B cell (primary cell): ENCODE measurements at regions of chr1 and their contacts with region 1.

Region 1: GRCh38 chr1:27321813-27322577 is at the start of gene TMEM222:
- DNase-seq: peak; percentile 98
- ATAC-seq: peak; percentile 96
- H3K4me3 ChIP-seq: peak within 1 kb of the TSS; percentile 80 to 100 (median 98)
- H3K4me3 Mint-ChIP-seq: peak within 1 kb of the TSS; percentile 98
- H3K27ac ChIP-seq: peak within 1 kb of the TSS; percentile 94
- H3K27ac Mint-ChIP-seq: peak within 1 kb of the TSS; percentile 97
- H3K4me1 ChIP-seq: peaks cover 17 to 25% of the 10 kb centered on the region in 2 donors
- H3K4me1 Mint-ChIP-seq: peaks cover 51% of the 10 kb centered on the region
- H3K27me3 ChIP-seq: no peaks in the 10 kb centered on the region
- H3K27me3 Mint-ChIP-seq: peaks cover 12% of the 10 kb centered on the region
- CTCF ChIP-seq: no peak
- total RNA-seq, gene TMEM222: 44.2 and 48.7 TPM in 2 replicates

Region 2: GRCh38 chr1:27287791-27288190 is 34.2 kb before region 1 on chr1:
- CTCF ChIA-PET with region 1: no interaction called
- POLR2A ChIA-PET with region 1: no interaction called
- intact Hi-C with region 1: no loop called
- DNase-seq: no peak
- ATAC-seq: no peak
- H3K4me3 ChIP-seq: no peak overlapping the region
- H3K4me3 Mint-ChIP-seq: no peak overlapping the region
- H3K27ac ChIP-seq: no peak overlapping the region
- H3K27ac Mint-ChIP-seq: no peak overlapping the region
- H3K4me1 ChIP-seq: peaks cover 0 to 9% of the 10 kb centered on the region in 2 donors
- H3K4me1 Mint-ChIP-seq: peaks cover 12% of the 10 kb centered on the region
- H3K27me3 ChIP-seq: no peaks in the 10 kb centered on the region
- H3K27me3 Mint-ChIP-seq: no peaks in the 10 kb centered on the region
- CTCF ChIP-seq: no peak

Region 3: GRCh38 chr1:27341525-27342252 is 19.7 kb after region 1 on chr1 and contains the start of gene SYTL1:
- CTCF ChIA-PET with region 1: interaction called, 12 read pairs
- POLR2A ChIA-PET with region 1: interaction called, 6 read pairs
- intact Hi-C with region 1: loop called (anchors 1 kb)
- DNase-seq: peak; percentile 89
- ATAC-seq: peak; percentile 78
- H3K4me3 ChIP-seq: peak within 1 kb of the TSS; percentile 61 to 89 (median 79)
- H3K4me3 Mint-ChIP-seq: peak within 1 kb of the TSS; percentile 96
- H3K27ac ChIP-seq: peak within 1 kb of the TSS; percentile 85 to 88
- H3K27ac Mint-ChIP-seq: peak within 1 kb of the TSS; percentile 98
- H3K4me1 ChIP-seq: peaks cover 37 to 59% of the 10 kb centered on the region in 2 donors
- H3K4me1 Mint-ChIP-seq: peaks cover 64% of the 10 kb centered on the region
- H3K27me3 ChIP-seq: no peaks in the 10 kb centered on the region
- H3K27me3 Mint-ChIP-seq: no peaks in the 10 kb centered on the region
- CTCF ChIP-seq: no peak
- total RNA-seq, gene SYTL1: 156 and 159 TPM in 2 replicates

Region 4: GRCh38 chr1:27365372-27366112 is 43.5 kb after region 1 on chr1:
- CTCF ChIA-PET with region 1: interaction called, 3 read pairs
- POLR2A ChIA-PET with region 1: no interaction called
- intact Hi-C with region 1: loop called (anchors 5 kb)
- DNase-seq: peak; percentile 88
- ATAC-seq: peak; percentile 70
- H3K4me3 ChIP-seq: peak overlapping the region; percentile 32 to 74 (median 60)
- H3K4me3 Mint-ChIP-seq: peak overlapping the region; percentile 93
- H3K27ac ChIP-seq: no peak overlapping the region
- H3K27ac Mint-ChIP-seq: peak overlapping the region; percentile 82
- H3K4me1 ChIP-seq: peaks cover 33 to 47% of the 10 kb centered on the region in 2 donors
- H3K4me1 Mint-ChIP-seq: peaks cover 54% of the 10 kb centered on the region
- H3K27me3 ChIP-seq: no peaks in the 10 kb centered on the region
- H3K27me3 Mint-ChIP-seq: no peaks in the 10 kb centered on the region
- CTCF ChIP-seq: no peak

Region 5: GRCh38 chr1:27568300-27569087 is 246.5 kb after region 1 on chr1:
- CTCF ChIA-PET with region 1: no interaction called
- POLR2A ChIA-PET with region 1: no interaction called
- intact Hi-C with region 1: loop called (anchors 1 kb)
- DNase-seq: peak; percentile 95
- ATAC-seq: peak; percentile 92
- H3K4me3 ChIP-seq: peak overlapping the region in 4 of 5 experiments; percentile 25 to 69 (median 50)
- H3K4me3 Mint-ChIP-seq: peak overlapping the region; percentile 86
- H3K27ac ChIP-seq: peak overlapping the region; percentile 27 to 68
- H3K27ac Mint-ChIP-seq: peak overlapping the region; percentile 69
- H3K4me1 ChIP-seq: peaks cover 15 to 38% of the 10 kb centered on the region in 2 donors
- H3K4me1 Mint-ChIP-seq: peaks cover 40% of the 10 kb centered on the region
- H3K27me3 ChIP-seq: no peaks in the 10 kb centered on the region
- H3K27me3 Mint-ChIP-seq: no peaks in the 10 kb centered on the region
- CTCF ChIP-seq: peak; percentile 82

Region 6: DNA sequence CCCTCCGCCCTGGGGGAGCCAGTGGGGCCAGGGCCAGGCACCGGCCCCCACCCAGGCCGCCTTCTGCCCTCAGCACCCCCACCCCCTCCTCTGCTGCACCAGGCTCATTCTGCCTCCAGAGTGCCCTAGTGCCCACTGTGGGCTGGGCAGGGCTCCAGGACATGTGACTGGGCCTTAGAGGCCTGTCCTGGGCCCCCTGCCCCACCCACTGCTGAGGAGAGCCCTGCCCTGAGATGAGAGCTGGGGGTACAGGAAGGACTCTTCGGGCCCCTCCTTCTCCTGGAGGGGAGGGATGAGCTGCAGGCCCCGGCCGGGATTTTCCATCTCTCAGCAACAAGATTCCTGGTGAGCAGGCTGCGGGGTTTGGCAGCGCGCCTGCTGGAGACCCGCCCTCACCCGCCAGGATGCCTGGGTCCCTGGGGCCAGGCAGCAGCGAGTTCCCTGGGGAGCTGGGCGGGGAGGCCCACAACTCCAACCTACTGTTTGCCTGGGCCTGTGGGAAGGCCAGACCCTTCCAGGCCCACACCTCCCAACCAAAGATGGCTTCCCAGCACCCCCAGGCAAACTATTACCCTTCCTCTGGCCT is 267.9 kb after region 1 on chr1:
- CTCF ChIA-PET with region 1: no interaction called
- POLR2A ChIA-PET with region 1: no interaction called
- intact Hi-C with region 1: no loop called
- DNase-seq: no peak
- ATAC-seq: no peak
- H3K4me3 ChIP-seq: no peak overlapping the region
- H3K4me3 Mint-ChIP-seq: no peak overlapping the region
- H3K27ac ChIP-seq: no peak overlapping the region
- H3K27ac Mint-ChIP-seq: no peak overlapping the region
- H3K4me1 ChIP-seq: peaks cover 3 to 16% of the 10 kb centered on the region in 2 donors
- H3K4me1 Mint-ChIP-seq: peaks cover 6% of the 10 kb centered on the region
- H3K27me3 ChIP-seq: no peaks in the 10 kb centered on the region
- H3K27me3 Mint-ChIP-seq: no peaks in the 10 kb centered on the region
- CTCF ChIP-seq: no peak

Region 7: DNA sequence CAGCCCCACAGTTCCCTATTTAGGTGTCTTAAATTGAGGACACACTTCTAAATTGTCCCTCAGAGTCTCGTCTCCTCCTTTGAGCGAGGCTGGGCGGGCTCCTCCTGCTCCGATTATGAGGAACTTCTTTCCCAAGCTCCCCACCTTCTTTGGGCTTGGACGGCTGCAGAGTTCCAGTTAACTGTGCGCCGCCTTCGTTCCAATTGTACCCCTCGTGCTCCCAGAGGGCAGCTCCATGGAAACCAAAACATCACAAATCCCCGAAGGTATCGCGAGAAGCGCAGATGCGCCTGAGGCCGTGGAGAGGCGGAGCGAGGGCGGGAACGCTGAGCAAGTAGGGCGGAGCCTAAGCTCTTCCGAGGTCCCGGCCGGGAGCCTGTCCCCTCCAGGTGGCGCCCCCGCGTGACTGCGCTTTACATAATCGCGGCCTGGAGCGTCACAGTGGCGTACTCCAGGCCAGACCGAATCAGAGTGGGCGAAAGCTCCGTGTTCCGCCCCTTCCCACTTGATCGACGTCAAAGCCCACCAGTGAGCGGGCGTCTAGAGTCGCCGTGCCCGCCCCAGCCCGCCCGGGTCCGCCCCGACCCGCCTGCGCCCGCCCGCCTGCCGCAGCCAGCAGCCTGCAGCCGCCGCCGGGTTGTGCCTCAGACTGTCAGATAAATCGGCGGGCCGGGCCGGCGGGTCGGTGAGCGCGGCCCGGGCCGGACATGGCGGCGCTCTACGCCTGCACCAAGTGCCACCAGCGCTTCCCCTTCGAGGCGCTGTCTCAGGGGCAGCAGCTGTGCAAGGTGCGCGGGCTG is 403.6 kb after region 1 on chr1 and contains the start of gene FAM76A:
- CTCF ChIA-PET with region 1: no interaction called
- POLR2A ChIA-PET with region 1: no interaction called
- intact Hi-C with region 1: loop called (anchors 1 kb)
- DNase-seq: peak; percentile 100
- ATAC-seq: peak; percentile 91
- H3K4me3 ChIP-seq: peak within 1 kb of the TSS; percentile 68 to 94 (median 74)
- H3K4me3 Mint-ChIP-seq: peak within 1 kb of the TSS; percentile 94
- H3K27ac ChIP-seq: peak within 1 kb of the TSS; percentile 96 to 98
- H3K27ac Mint-ChIP-seq: peak within 1 kb of the TSS; percentile 98
- H3K4me1 ChIP-seq: peaks cover 17% of the 10 kb centered on the region in 2 donors
- H3K4me1 Mint-ChIP-seq: peaks cover 25% of the 10 kb centered on the region
- H3K27me3 ChIP-seq: no peaks in the 10 kb centered on the region
- H3K27me3 Mint-ChIP-seq: no peaks in the 10 kb centered on the region
- CTCF ChIP-seq: peak; percentile 27
- total RNA-seq, gene FAM76A: 25.0 and 28.5 TPM in 2 replicates

Region 8: DNA sequence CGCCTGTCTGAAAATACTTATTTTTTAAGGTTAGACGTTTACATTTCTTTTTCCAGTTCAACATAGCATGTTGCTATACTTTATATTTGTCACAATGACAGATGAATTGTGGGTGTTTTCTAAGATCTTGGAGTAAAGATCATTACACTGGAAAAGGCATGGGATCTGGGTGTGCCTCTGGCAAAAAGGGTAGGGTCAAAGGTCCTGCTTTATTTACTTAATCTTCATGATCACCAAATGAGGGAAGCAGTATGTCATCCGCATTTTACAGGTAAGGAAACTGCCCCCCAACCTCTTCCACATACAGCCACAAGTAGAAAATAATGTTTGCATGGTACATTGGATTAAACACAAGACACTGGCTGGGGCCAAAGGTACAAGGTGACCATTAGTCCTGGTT is 600.3 kb after region 1 on chr1:
- CTCF ChIA-PET with region 1: no interaction called
- POLR2A ChIA-PET with region 1: no interaction called
- intact Hi-C with region 1: no loop called
- DNase-seq: no peak
- ATAC-seq: no peak
- H3K4me3 ChIP-seq: no peak overlapping the region
- H3K4me3 Mint-ChIP-seq: no peak overlapping the region
- H3K27ac ChIP-seq: no peak overlapping the region
- H3K27ac Mint-ChIP-seq: no peak overlapping the region
- H3K4me1 ChIP-seq: no peaks in the 10 kb centered on the region
- H3K4me1 Mint-ChIP-seq: no peaks in the 10 kb centered on the region
- H3K27me3 ChIP-seq: no peaks in the 10 kb centered on the region
- H3K27me3 Mint-ChIP-seq: peaks cover 12% of the 10 kb centered on the region
- CTCF ChIP-seq: no peak